Vagina (tissue), 2 donors: ENCODE measurements at regions of chr15 and their contacts with region 1.

Region 1: DNA sequence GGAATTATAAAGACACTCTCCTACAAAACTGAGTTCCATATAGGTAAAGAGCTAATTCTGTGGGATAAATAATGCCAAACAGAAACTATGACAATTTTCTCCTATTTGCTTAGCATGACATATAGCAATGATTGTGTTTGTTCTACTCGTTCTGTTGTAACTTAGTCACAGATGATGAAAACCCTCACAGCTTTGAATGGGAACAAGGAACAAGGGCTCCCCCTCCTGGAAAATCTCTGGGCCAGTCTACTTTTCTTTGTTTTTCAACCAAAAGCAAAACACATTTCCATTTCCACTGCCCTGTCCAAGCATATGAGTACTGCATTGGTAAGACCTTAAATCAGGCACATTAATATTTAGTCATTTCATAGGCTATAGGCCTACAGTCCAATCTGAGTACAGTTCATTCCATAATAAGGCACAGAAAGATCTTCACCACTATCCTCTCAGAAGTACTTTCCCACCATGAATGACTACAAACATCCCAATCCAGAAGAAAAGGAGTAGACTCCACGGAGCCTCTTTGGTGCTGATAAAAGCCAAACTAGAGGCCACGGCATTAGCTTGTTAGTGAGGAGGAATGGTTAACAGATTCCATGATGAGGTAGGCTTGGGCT is 67.1 kb downstream of the ATP8B4 start:
- DNase-seq: no peak
- H3K4me3 ChIP-seq: no peak overlapping the region
- H3K27ac ChIP-seq: peak overlapping the region; percentile 7
- H3K4me1 ChIP-seq: no peaks in the 10 kb centered on the region
- H3K27me3 ChIP-seq: no peaks in the 10 kb centered on the region
- CTCF ChIP-seq: peak in 2 of 3 experiments; percentile 21 to 49
- POLR2A ChIP-seq: no peak

Region 2: DNA sequence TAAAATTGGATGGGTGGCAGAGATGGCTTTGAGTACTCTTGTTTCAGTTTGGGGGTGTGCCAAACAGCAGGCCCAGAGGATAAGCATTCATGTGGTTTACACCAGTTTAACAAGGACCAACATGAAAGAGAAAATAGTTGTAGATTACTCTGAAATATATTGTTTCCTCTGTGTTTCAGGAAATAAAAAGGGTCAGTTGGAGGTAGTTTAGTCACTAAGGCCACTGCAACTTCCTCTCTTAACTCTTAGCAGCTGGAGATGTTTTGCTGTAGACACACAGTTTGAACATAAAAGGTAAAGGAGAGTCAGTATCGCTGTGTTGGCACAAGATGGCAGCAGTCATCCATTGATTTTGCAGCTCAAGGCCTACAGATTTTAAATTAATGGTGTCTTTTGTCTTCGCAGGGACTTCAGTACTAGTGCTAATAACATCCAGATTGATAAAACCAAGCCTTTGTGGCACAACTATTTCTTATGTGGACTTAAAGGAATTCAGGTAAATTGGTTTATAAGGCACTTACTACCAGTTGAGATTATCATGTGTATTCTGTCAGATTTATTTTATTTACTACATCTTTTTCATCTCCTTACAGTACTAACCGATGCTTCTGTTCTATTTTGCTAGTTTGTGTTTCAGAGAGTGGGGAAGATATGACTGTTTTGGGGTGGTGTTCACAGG is 816.3 kb before region 1 on chr15:
- intact Hi-C with region 1: loop called (anchors 5 kb)
- DNase-seq: no peak
- H3K4me3 ChIP-seq: no peak overlapping the region
- H3K27ac ChIP-seq: no peak overlapping the region
- H3K4me1 ChIP-seq: peaks cover 9% of the 10 kb centered on the region
- H3K27me3 ChIP-seq: no peaks in the 10 kb centered on the region
- CTCF ChIP-seq: peak; percentile 56 to 62 (median 60)
- POLR2A ChIP-seq: no peak

Region 3: GRCh38 chr15:49421991-49422390 is 629.9 kb before region 1 on chr15:
- intact Hi-C with region 1: loop called (anchors 10 kb)
- DNase-seq: no peak
- H3K4me3 ChIP-seq: peak overlapping the region; percentile 3 to 42
- H3K27ac ChIP-seq: peak overlapping the region; percentile 74
- H3K4me1 ChIP-seq: no peaks in the 10 kb centered on the region
- H3K27me3 ChIP-seq: no peaks in the 10 kb centered on the region
- CTCF ChIP-seq: peak in 2 of 3 experiments; percentile 45 to 96
- POLR2A ChIP-seq: no peak

Region 4: DNA sequence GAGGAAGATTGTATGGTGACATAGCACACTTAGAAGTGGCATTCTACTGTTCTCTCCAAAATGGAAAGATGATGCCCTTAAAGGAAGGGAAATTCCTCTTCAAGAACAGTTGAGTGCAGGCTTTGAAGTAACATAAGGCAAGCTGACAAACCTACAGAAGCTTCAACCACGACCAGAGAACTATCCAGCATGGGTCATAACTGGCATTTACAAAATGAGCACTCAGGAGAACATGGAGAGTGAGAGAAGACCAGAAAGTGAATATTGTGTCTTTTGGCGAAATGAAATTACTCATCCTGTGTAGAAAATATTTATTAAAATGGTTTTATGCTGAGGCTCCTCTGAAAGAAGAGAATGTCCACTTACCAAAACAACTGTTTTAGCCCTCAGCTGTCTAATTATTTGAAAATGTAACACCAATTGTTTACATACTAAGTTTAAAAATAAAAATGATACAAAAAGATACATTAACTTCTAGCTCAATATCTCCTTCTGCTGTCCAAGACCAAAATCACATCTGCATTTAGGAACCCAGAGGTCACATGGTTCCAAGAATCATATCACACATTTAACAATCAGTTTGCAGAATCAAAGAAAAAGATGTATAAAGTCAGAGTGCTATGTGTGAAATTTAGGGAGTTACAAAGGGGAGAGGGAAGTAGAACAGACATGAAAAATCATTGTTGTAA is 149.8 kb before region 1 on chr15:
- intact Hi-C with region 1: loop called (anchors 10 kb)
- DNase-seq: no peak
- H3K4me3 ChIP-seq: no peak overlapping the region
- H3K27ac ChIP-seq: peak overlapping the region; percentile 82
- H3K4me1 ChIP-seq: peaks cover 47% of the 10 kb centered on the region
- H3K27me3 ChIP-seq: no peaks in the 10 kb centered on the region
- CTCF ChIP-seq: no peak
- POLR2A ChIP-seq: no peak